Activated CD8-positive, alpha-beta T cell treated with anti-CD3 and anti-CD28 coated beads for 36 hours (primary cell): ENCODE measurements at regions of chr1 and their contacts with region 1.

Region 1: GRCh38 chr1:54052934-54053744 is at the starts of genes TCEANC2 and TMEM59:
- DNase-seq: peak; percentile 99
- ATAC-seq: peak; percentile 95
- H3K4me3 Mint-ChIP-seq: no peak within 1 kb of the TSS
- H3K27ac Mint-ChIP-seq: no peak within 1 kb of the TSS
- H3K4me1 Mint-ChIP-seq: peaks cover 31% of the 10 kb centered on the region
- H3K27me3 Mint-ChIP-seq: no peaks in the 10 kb centered on the region
- CTCF ChIP-seq: no peak
- total RNA-seq, gene TCEANC2: 11.1 to 11.2 TPM
- total RNA-seq, gene TMEM59: 93.4 to 109 TPM

Region 2: DNA sequence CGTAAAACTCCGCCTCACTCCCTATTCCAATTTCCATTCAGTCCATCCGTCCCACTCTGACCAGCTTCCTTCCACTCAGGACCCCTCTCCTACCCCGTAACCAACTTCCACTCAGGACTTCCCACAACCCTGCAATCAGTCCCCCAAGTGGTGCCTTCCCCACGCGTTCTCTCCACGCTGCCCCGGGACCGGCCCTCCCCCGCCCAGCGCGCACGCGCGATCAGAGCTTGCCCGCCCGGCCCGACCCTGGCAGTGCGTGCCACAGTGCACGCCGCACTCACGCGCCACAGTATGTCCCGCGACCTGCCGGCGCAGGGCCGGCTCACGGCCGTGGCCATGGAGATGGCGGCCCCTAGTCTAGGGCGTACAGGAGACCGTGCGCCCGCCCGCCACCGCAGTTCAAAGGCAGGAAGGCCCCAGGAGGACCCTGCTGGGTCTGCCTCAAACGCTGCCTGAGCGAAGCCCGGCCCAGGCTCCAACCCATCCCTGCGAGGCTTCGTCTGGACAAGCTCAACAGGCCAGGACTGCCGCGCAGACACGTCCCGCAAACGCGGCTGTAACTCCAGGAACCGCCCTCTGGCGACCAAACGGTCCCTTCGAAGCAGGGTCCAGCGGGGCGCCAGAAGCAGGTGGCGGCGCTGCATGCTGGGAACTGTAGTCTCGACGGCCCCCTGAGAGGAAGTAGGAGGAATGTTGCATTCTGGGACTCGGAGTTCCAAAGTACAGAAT is 215.1 kb before region 1 on chr1 and contains the start of gene NDC1:
- CTCF ChIA-PET with region 1: interaction called, 3 read pairs
- POLR2A ChIA-PET with region 1: interaction called, 3 read pairs
- intact Hi-C with region 1: loop called (anchors 5 kb)
- DNase-seq: peak; percentile 93
- ATAC-seq: peak; percentile 92
- H3K4me3 Mint-ChIP-seq: peak within 1 kb of the TSS; percentile 99
- H3K27ac Mint-ChIP-seq: peak within 1 kb of the TSS; percentile 93
- H3K4me1 Mint-ChIP-seq: peaks cover 26% of the 10 kb centered on the region
- H3K27me3 Mint-ChIP-seq: peaks cover 2% of the 10 kb centered on the region
- CTCF ChIP-seq: no peak
- total RNA-seq, gene NDC1: 39.6 to 43.9 TPM

Region 3: DNA sequence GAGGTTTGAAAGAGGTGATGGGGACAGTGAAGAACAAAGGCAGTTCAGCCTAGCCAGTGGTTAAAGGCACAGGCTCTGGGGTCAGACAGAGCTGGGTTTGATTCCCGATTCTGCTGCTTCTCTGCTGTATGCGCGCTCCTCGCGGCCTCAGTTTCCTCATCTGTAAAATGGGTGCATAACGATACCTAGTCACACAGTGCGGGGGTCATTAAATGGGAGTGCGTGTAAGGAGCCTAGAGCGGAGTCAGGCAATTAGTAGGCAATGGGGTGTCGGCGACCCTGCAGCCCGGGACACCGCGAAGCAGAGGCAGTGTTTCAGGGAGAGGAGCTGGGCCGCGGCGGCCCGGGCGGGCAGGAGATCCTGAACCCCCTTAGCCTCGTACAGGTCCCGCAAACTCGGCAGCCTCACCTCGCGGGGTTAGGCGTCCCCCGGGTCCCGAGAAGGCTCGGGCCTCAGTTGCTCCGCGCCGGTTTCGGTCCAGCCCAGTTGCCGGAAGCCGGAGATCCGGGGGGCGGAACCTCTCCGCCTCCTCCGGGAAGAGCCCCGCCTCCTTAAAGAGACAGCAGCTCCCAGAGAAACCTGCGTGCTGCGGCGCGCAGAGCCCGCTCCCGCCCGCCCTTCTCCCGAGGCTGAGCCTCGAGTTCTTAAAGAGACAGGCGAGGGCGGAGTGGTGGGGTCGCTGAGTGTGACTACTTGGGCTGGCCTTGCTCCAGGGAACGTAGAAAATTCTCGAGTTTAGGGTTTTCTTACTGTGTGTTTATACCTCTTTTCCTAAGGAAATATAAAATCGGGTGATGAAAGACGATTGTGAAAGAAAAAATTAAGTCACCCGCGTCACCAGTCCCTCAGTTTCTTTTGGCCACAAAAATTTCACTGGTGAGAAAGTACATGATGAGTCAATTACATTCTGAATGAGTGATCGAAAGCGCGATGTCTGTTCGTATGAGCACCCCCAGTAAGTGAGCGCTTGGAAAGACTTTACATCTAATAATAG is 163.5 kb before region 1 on chr1 and contains the start of gene YIPF1:
- CTCF ChIA-PET with region 1: no interaction called
- POLR2A ChIA-PET with region 1: no interaction called
- intact Hi-C with region 1: loop called (anchors 5 kb)
- DNase-seq: peak; percentile 89
- ATAC-seq: peak; percentile 92
- H3K4me3 Mint-ChIP-seq: peak within 1 kb of the TSS; percentile 96
- H3K27ac Mint-ChIP-seq: peak within 1 kb of the TSS; percentile 99
- H3K4me1 Mint-ChIP-seq: peaks cover 36% of the 10 kb centered on the region
- H3K27me3 Mint-ChIP-seq: no peaks in the 10 kb centered on the region
- CTCF ChIP-seq: no peak
- total RNA-seq, gene YIPF1: 13.2 to 15.6 TPM

Region 4: GRCh38 chr1:53971718-53972117 is 81.4 kb before region 1 on chr1:
- CTCF ChIA-PET with region 1: no interaction called
- POLR2A ChIA-PET with region 1: no interaction called
- intact Hi-C with region 1: no loop called
- DNase-seq: no peak
- ATAC-seq: no peak
- H3K4me3 Mint-ChIP-seq: no peak overlapping the region
- H3K27ac Mint-ChIP-seq: no peak overlapping the region
- H3K4me1 Mint-ChIP-seq: peaks cover 3% of the 10 kb centered on the region
- H3K27me3 Mint-ChIP-seq: no peaks in the 10 kb centered on the region
- CTCF ChIP-seq: no peak